Head of caudate nucleus (tissue), 42 donors: ENCODE measurements at regions of chr18 and their contacts with region 1.

Region 1: DNA sequence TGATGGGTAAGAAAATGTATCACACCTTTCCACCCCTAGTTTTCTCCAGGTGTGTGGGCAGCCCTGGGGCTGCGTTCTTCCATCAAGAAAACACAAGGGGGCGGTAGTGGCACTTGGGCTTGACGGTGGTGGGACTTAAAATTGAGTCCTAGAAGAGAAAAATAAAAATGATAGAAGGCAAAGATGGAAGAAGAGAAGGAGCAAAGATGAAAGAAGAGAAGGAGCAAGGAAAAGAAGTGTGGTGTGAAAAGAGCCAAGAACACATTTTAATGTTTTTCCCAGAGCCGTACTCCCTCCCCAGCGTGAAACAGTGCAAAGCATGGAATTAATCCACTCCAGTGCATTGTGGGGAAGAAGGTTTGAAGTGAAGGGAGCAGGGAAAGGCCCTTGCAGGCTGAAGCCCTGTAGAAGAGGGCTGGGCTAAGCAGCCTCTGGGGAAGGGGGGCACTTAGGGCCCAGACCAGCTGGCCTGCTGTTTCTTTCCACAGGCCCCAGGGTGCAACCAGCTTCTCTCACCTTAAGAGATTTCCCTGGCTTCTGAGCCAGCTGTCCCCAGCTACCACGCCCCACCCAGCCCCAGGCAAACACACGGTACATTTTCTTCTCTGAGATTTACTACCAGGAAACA is 256.8 kb downstream of the RNF152 start:
- DNase-seq: peak in 41 of 42 donors; percentile 16 to 74 (median 52)

Region 2: GRCh38 chr18:61464551-61465102 is 171.4 kb before region 1 on chr18:
- intact Hi-C with region 1: no loop called
- DNase-seq: no peak

Region 3: DNA sequence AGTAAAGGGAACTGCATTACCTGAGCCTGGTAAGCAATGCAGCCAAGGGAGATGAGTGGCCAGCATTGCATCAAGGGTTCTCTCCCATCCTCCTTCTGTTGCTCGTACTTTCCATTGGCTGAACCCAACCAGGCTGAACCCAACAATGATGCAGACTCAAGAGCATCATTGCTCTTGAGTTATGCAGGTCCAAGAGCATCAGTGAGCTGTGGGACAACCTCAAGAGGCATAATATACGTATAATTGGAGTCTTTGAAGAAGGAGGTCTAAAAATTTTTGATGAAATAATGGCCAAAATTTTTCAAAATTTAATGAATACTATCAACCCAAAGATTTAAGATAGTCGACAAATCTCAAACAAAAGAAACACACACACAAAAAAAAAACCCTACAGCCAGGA is 43.8 kb after region 1 on chr18:
- intact Hi-C with region 1: no loop called
- DNase-seq: no peak

Region 4: GRCh38 chr18:61710082-61710620 is 74.1 kb after region 1 on chr18:
- intact Hi-C with region 1: no loop called
- DNase-seq: no peak

Region 5: DNA sequence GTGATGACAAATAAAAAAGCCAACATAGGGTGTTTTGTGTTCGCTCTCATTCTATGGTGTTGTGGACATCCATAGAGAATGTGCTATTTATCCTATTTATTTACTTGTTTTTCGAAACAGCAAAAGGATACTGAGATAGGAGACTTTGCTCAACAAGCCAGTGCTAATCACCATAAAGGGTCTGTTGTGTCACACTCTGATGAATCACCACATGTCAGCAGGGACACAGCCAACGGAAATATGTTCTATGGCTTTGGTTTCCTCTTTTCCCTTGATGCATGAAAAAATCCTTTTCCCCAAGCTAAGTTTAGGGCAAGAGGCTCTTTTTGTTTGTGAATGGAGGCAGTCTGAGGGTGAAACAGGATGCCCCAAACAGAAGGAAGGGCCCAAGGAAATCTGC is 102.5 kb after region 1 on chr18:
- intact Hi-C with region 1: no loop called
- DNase-seq: no peak

Region 6: DNA sequence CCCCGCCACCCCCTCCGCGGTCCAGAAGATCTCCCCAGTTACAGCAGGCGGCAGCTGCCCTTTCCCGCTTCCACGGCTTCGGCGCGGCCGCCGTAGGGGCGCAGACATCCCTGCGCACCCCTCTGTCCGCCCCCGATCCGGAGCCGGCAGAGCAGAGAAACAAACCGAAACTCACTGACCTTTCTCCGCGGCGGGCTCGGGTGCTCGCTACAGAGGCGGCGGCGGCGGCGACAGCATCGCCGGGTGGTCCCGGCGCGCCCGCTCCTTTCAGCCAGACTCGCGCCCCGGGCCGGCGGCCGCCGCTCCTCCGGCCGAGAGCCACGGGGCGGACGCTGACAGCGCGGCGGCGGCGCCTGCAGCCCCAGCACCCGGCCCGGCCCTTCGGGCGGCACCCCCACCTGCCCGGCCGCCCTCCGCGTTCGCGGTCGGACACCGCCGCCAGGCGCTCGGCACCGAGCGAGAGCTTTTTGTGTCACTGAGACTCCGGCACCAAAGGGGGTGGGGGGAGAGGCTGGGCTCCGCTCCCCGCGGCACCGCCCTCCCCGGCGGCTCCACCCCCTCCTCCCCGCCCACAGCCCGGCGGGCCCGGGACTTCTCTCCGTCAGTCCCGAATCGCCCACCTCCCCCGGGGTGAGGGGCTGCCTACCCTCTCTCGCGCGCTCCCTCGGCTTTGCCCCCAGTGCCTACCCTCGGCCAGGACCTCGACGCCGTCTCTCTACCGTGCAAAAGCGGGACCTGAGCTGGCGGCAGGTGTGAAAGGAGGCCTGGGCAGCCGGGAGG is 258.1 kb after region 1 on chr18:
- intact Hi-C with region 1: loop called (anchors 5 kb)
- DNase-seq: peak; percentile 55 to 92 (median 83)